ENCODE measurements at regions of chr2 and their contacts with region 1.

Region 1: GRCh38 chr2:201642579-201643215 is 606 bp downstream of the TMEM237 start:
- DNase-seq: peak; percentile 91
- ATAC-seq: peak; percentile 86
- H3K4me3 Mint-ChIP-seq: peak overlapping the region; percentile 95
- H3K27ac Mint-ChIP-seq: peak overlapping the region; percentile 91
- H3K4me1 Mint-ChIP-seq: peaks cover 9% of the 10 kb centered on the region
- H3K27me3 Mint-ChIP-seq: no peaks in the 10 kb centered on the region
- CTCF ChIP-seq: no peak

Region 2: DNA sequence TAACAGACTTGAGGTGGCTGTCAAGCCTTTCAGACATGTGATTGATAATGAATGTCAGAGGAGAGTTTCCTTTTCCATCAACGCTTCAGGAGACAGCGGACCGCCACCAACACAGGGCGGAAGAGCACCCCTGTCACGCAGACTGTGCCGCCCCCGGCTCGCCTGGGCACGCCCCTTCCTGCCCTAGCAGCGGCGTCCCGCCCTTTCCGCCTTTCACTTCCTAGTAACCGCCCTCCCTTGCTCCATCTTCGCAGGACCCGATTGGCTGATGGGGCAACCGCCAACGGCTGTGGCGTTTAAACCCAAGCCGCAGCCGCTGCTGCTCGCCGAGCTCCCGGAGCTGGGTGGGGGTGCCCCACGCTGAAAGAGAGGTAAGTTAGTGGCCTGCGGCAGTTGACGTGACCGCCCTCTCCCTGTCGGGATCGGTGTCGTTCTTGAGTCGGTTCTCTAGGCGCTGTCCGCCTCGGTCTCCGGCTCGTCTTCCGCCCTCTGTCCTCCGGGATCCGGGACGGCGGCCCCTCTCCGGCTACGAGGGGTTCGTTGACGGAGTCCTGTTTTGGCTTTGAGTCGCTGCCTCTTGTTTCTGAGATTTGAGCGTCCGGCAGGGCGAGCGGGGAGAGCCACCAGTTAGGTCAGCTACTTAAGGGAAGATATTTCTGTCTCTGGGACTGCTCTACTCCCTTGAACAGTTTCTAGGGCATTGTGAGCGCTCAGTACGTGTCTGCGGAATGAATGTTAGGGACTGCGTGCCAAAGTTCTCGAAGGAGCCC is 1116.6 kb before region 1 on chr2 and contains the start of gene SGO2:
- CTCF ChIA-PET with region 1: no interaction called
- POLR2A ChIA-PET with region 1: no interaction called
- intact Hi-C with region 1: loop called (anchors 10 kb)
- DNase-seq: peak; percentile 90
- ATAC-seq: peak; percentile 100
- H3K4me3 Mint-ChIP-seq: peak within 1 kb of the TSS; percentile 95
- H3K27ac Mint-ChIP-seq: peak within 1 kb of the TSS; percentile 80
- H3K4me1 Mint-ChIP-seq: peaks cover 14% of the 10 kb centered on the region
- H3K27me3 Mint-ChIP-seq: peaks cover 5% of the 10 kb centered on the region
- CTCF ChIP-seq: no peak
- total RNA-seq, gene SGO2: 3.3 and 3.8 TPM in 2 replicates

Region 3: GRCh38 chr2:200963124-200963917 is 679.4 kb before region 1 on chr2 and contains the start of gene ORC2:
- CTCF ChIA-PET with region 1: no interaction called
- POLR2A ChIA-PET with region 1: no interaction called
- intact Hi-C with region 1: loop called (anchors 1 kb)
- DNase-seq: peak; percentile 94
- ATAC-seq: peak; percentile 93
- H3K4me3 Mint-ChIP-seq: peak within 1 kb of the TSS; percentile 97
- H3K27ac Mint-ChIP-seq: peak within 1 kb of the TSS; percentile 97
- H3K4me1 Mint-ChIP-seq: peaks cover 63% of the 10 kb centered on the region
- H3K27me3 Mint-ChIP-seq: no peaks in the 10 kb centered on the region
- CTCF ChIP-seq: no peak
- total RNA-seq, gene ORC2: 36.8 and 38.1 TPM in 2 replicates

Region 4: DNA sequence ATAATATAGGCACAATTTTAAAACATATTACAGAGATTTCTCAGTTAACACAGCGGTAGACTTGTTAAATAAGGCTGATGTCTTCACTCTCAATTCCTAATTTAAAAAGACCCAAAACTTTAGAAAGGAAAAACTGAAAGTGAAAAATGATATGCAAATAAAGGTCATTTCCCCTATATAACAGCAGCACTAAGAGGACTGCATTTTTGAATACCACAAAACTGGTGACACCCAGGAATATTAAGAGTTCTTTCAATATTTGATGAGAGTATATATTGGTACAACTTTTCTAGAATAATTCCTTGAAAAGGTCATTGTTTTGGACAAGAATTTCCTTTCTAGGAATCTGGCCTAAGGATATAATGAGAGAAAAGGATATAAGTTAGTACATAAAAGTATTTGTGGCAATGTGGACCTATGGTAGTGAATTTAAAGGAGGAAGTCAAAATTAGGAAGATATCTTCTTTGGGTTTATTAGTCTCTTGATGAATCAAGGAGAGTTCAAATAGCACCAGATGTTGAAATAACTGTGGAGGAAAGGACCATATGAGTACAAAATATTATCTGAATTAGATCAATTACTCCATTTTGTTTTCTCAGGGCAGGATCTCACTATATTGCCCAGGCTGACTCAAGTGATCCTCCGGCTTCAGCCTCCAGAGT is 69.7 kb before region 1 on chr2:
- CTCF ChIA-PET with region 1: no interaction called
- POLR2A ChIA-PET with region 1: no interaction called
- intact Hi-C with region 1: loop called (anchors 2 kb)
- DNase-seq: no peak
- ATAC-seq: peak; percentile 71
- H3K4me3 Mint-ChIP-seq: peak overlapping the region; percentile 52
- H3K27ac Mint-ChIP-seq: peak overlapping the region; percentile 78
- H3K4me1 Mint-ChIP-seq: peaks cover 39% of the 10 kb centered on the region
- H3K27me3 Mint-ChIP-seq: peaks cover 2% of the 10 kb centered on the region
- CTCF ChIP-seq: no peak

Region 5: DNA sequence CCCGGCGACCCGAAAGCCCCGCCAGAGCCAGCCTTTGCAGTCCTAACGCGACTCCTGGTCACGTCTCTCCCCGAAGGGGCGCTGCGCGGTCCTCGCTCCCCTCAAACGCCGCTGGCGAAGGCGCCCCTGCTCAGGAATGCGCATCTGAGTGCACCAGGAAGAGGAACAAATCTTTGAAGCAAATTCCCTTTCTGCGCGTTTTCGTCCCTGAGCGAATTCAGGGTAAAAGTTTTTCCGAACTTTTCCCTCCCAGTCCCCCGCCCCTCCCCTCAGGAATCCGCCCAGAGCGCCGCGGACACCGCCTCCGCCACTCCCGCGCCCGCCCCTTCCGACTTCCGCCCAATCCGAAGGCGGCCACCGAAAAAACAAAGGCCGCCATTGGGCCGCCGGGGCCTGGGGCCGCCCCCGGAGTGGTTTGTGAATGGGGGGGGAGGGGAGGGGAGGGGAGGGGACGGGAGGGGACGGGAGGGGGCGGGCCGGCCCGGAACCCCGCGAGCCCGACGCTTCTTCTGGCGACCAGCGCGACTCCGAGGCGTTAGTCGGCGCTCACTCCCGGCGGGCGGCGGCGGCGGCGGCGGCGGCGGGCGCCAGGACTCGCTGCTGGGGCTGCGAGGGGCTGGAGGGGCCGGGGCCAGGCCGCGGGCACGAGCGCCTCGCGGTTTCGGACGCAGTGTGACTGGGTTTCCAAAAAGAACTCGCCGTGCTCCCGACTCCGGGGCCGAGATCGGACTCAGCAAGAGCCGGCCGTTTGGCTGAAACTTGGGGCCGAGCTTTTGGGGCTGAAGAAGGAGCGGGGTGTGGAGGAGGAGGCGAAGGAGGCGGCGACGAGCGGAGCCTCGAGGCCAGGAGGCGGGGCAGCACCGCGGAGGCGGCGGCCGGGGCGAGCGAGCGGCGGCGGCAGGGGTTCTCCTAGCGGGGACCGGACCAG is 390.9 kb after region 1 on chr2 and contains the start of gene FZD7:
- CTCF ChIA-PET with region 1: no interaction called
- POLR2A ChIA-PET with region 1: no interaction called
- intact Hi-C with region 1: loop called (anchors 1 kb)
- DNase-seq: peak; percentile 79
- ATAC-seq: peak; percentile 87
- H3K4me3 Mint-ChIP-seq: peak within 1 kb of the TSS; percentile 86
- H3K27ac Mint-ChIP-seq: peak within 1 kb of the TSS; percentile 14
- H3K4me1 Mint-ChIP-seq: peaks cover 12% of the 10 kb centered on the region
- H3K27me3 Mint-ChIP-seq: peaks cover 17% of the 10 kb centered on the region
- CTCF ChIP-seq: no peak
- total RNA-seq, gene FZD7: 0.33 and 0.37 TPM in 2 replicates

Measured in activated B cell treated with CpG ODN at 0.5 μM for 24 hours (primary cell).